Right lobe of liver (tissue), 6 donors: ENCODE measurements at regions of chr4 and their contacts with region 1.

Region 1: GRCh38 chr4:186587416-186588018 is 32.1 kb upstream of the MTNR1A start:
- DNase-seq: peak; percentile 65 to 70 (median 68)
- ATAC-seq: peak; percentile 80 to 87 (median 84)
- H3K4me3 ChIP-seq: no peak overlapping the region
- H3K27ac ChIP-seq: no peak overlapping the region
- H3K4me1 ChIP-seq: no peaks in the 10 kb centered on the region
- H3K27me3 ChIP-seq: no peaks in the 10 kb centered on the region
- CTCF ChIP-seq: peak; percentile 71 to 93 (median 93)
- POLR2A ChIP-seq: no peak

Region 2: DNA sequence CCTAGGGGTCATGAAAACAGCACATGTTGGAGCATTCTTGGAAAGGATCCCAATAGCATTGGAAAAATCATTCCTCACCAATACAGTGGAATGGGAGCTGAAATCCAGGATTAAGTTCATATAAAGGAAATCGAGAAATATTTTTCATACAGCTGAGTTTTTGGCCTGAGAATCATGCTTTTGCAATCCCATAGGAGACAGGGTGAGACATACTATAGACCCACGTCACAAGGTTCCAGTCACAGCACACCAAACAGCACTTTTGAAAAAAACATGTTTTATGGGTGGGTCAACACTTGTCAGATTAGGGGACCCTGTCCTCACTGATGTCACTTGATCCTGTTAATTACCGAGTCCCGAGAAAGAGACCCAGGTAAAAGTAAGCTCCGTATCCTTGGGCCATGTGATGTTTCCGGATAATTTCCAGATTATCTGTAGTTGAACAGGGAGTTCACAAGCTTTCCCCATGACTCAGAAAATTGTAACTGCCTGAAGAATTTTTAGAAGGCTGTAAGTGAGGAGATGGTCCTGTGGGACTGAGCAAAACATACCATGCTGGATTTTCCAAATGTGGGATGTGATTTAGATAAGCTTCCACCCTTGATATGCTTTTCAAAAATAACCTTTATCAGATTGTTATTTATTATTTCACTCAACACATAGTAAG is 599.4 kb before region 1 on chr4:
- intact Hi-C with region 1: no loop called
- DNase-seq: no peak
- ATAC-seq: no peak
- H3K4me3 ChIP-seq: no peak overlapping the region
- H3K27ac ChIP-seq: no peak overlapping the region
- H3K4me1 ChIP-seq: no peaks in the 10 kb centered on the region
- H3K27me3 ChIP-seq: no peaks in the 10 kb centered on the region
- CTCF ChIP-seq: no peak
- POLR2A ChIP-seq: no peak

Region 3: GRCh38 chr4:186297013-186297645 is 290.4 kb before region 1 on chr4:
- intact Hi-C with region 1: loop called (anchors 10 kb)
- DNase-seq: no peak
- ATAC-seq: peak; percentile 55 to 68 (median 65)
- H3K4me3 ChIP-seq: no peak overlapping the region
- H3K27ac ChIP-seq: no peak overlapping the region
- H3K4me1 ChIP-seq: peaks cover 0 to 3% (median 0%) of the 10 kb centered on the region in 4 donors
- H3K27me3 ChIP-seq: no peaks in the 10 kb centered on the region
- CTCF ChIP-seq: peak; percentile 64 to 66 (median 65)
- POLR2A ChIP-seq: no peak